ENCODE measurements at regions of chr2 and their contacts with region 1.

Region 1: DNA sequence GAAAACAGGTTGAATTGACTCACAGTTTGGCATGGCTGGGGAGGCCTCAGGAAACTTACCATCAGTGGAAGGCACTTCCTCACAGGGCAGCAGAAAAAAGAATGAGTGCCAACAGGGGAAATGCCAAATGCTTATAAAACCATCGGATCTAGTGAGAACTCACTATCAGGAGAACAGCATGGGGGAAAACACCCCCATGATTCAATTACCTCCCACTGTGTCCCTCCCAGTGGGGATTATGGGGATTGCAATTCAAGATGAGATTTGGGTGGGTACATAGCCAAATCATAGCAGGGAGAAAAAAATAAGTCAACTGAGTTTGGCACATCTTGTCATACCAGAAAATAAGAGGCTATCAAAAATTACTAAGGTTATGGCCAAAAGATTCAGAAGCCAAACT is 96.3 kb downstream of the TRIP12 start:
- DNase-seq: no peak
- ATAC-seq: no peak
- H3K4me3 ChIP-seq: no peak overlapping the region
- H3K4me3 Mint-ChIP-seq: no peak overlapping the region
- H3K27ac ChIP-seq: no peak overlapping the region
- H3K27ac Mint-ChIP-seq: no peak overlapping the region
- H3K4me1 ChIP-seq: no peaks in the 10 kb centered on the region
- H3K4me1 Mint-ChIP-seq: peaks cover 15% of the 10 kb centered on the region
- H3K27me3 ChIP-seq: no peaks in the 10 kb centered on the region
- H3K27me3 Mint-ChIP-seq: no peaks in the 10 kb centered on the region
- CTCF ChIP-seq: no peak

Region 2: GRCh38 chr2:229835596-229836283 is 10.3 kb after region 1 on chr2:
- CTCF ChIA-PET with region 1: no interaction called
- POLR2A ChIA-PET with region 1: interaction called, 8 read pairs
- intact Hi-C with region 1: loop called in 1 of 2 experiments (anchors 1 kb)
- DNase-seq: peak in 3 of 9 experiments; percentile 25 to 71 (median 53)
- ATAC-seq: peak; percentile 73
- H3K4me3 ChIP-seq: no peak overlapping the region
- H3K4me3 Mint-ChIP-seq: peak overlapping the region; percentile 16
- H3K27ac ChIP-seq: peak overlapping the region in 1 of 2 experiments; percentile 26
- H3K27ac Mint-ChIP-seq: peak overlapping the region; percentile 25
- H3K4me1 ChIP-seq: peaks cover 47% of the 10 kb centered on the region
- H3K4me1 Mint-ChIP-seq: peaks cover 71% of the 10 kb centered on the region
- H3K27me3 ChIP-seq: no peaks in the 10 kb centered on the region
- H3K27me3 Mint-ChIP-seq: no peaks in the 10 kb centered on the region
- CTCF ChIP-seq: no peak

Region 3: GRCh38 chr2:229869226-229869625 is 43.8 kb after region 1 on chr2:
- CTCF ChIA-PET with region 1: no interaction called
- POLR2A ChIA-PET with region 1: no interaction called
- intact Hi-C with region 1: loop called in 1 of 2 experiments (anchors 5 kb)
- DNase-seq: no peak
- ATAC-seq: no peak
- H3K4me3 ChIP-seq: no peak overlapping the region
- H3K4me3 Mint-ChIP-seq: no peak overlapping the region
- H3K27ac ChIP-seq: no peak overlapping the region
- H3K27ac Mint-ChIP-seq: peak overlapping the region; percentile 10
- H3K4me1 ChIP-seq: peaks cover 19% of the 10 kb centered on the region
- H3K4me1 Mint-ChIP-seq: peaks cover 73% of the 10 kb centered on the region
- H3K27me3 ChIP-seq: no peaks in the 10 kb centered on the region
- H3K27me3 Mint-ChIP-seq: no peaks in the 10 kb centered on the region
- CTCF ChIP-seq: no peak

Measured in CD8-positive, alpha-beta T cell (primary cell).